HEK293T (cell line): ENCODE measurements at regions of chr11 and their contacts with region 1.

Region 1: DNA sequence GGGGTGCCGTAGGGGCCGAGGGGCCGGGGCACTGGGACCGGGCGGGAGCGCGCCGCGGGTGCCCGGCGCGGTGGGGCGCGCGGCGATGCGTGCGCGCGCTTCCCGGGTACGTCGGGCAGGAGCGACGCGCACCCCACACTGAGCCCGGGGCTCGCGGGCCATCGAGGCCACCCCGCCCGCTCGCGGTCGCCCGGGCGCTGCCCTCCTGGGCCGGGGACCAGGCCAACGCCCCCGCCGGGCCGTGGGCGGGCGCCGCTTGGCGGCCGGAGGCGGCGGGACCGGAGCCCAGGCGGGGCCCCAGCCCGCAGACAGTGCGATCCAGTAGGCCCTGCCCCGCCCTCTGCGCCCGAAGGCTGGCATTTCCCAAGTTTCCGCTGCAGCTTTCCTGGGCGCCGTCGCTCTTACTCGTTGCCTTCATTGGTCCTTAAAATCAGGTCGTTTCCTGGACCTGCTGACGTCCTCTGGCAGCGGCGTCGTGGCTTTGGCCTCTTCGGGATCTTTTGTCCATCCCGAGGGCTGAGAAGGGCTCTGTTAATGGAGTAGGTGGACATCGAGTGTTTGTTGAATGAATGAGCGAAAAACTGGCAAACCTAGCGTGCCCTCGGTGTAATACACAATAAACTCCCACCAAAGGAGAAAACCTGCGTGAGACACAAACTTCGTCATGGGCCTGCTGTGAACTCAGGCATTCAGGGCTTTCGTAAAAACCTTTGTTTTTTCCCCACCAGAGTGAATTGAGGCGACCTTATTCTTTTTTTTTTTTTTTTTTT is 638 bp downstream of the PARVA start:
- DNase-seq: peak; percentile 72

Region 2: GRCh38 chr11:12361682-12362081 is 16.3 kb before region 1 on chr11:
- CTCF ChIA-PET with region 1: interaction called, 6 read pairs
- POLR2A ChIA-PET with region 1: interaction called, 14 read pairs
- DNase-seq: no peak

Region 3: GRCh38 chr11:12390687-12391110 is 12.7 kb after region 1 on chr11:
- CTCF ChIA-PET with region 1: no interaction called
- POLR2A ChIA-PET with region 1: interaction called, 11 read pairs
- DNase-seq: no peak